Activated CD4-positive, alpha-beta T cell treated with anti-CD3 and anti-CD28 coated beads for 36 hours (primary cell): ENCODE measurements at regions of chr1 and their contacts with region 1.

Region 1: DNA sequence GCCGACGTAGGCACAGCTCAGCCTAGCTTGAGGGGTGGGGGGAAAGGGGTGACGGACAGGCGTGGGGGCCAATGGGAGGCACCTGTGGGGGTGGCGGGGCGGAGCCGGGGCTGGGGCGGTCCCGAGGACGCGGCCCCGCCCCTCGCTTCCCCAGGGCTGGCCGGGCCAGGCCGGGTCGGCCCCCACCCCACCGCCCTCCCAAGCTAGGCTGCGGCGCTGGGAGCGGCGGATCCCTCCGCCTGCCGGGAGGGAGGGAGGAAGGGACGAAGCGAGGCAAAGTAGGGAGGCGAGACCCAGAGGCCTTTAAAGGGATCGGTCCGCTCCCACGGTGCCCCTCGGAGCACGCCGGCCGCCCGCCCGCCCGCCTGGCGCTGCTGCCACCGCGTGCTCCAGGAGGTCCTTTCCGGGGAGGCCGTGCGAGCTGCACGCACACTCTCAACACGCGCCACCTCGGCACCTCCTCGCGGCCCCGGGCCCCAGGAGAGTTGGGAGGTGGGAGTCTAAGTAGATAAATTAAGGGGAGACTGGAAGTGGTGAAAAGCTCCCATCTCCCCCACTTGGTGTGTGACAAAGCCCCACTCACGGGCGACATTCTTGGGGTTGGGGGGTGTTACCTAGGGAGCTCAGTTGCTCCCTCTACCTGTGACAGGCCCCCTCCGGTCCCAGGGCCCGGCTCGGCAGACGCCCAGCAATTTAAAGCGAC is 373 bp upstream of the MEF2D start:
- DNase-seq: peak; percentile 96
- ATAC-seq: peak; percentile 65
- H3K4me3 Mint-ChIP-seq: peak overlapping the region; percentile 88
- H3K27ac Mint-ChIP-seq: peak overlapping the region; percentile 99
- H3K4me1 Mint-ChIP-seq: peaks cover 73% of the 10 kb centered on the region
- H3K27me3 Mint-ChIP-seq: no peaks in the 10 kb centered on the region

Region 2: GRCh38 chr1:155648551-155649147 is 852.3 kb before region 1 on chr1:
- CTCF ChIA-PET with region 1: no interaction called
- POLR2A ChIA-PET with region 1: no interaction called
- intact Hi-C with region 1: no loop called
- DNase-seq: no peak
- ATAC-seq: peak; percentile 51
- H3K4me3 Mint-ChIP-seq: no peak overlapping the region
- H3K27ac Mint-ChIP-seq: no peak overlapping the region
- H3K4me1 Mint-ChIP-seq: peaks cover 4% of the 10 kb centered on the region
- H3K27me3 Mint-ChIP-seq: peaks cover 2% of the 10 kb centered on the region

Region 3: DNA sequence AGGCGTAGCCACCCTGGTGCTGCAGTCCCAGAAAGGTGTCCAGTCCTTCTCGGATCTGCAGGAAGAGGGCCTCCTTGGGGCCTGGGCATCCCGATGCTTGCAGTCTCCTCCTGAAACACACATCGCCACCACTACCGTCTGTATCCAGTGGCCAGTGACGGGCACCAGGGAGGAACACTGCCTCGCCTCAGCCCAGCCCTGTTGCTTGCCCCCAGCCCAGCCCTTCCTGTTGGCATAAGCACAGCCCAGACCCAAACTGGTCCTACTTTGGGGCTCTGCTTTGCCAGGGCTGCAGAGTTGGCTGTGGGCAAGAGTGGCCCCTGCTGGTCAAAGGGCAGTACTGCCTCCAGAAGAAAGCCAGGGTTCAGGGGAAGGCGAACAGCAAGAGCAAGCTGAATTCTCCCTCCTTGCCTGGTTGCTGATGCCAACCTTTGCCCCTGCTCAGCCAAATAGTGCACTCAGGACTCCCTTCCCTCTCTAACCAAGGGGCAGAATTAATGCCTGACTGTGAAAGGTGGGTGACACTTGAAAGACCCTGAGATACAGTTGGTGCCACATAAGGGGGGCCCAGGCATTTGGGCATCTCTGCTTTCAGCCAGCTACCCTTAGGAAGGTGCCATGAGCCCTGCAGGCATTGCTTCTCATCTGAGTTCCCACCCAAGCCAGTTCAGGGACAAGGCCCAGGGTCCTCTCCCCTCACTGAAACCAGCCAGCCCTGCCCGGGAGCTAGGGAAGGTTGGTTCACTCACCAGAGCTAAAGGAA is 511.5 kb before region 1 on chr1:
- CTCF ChIA-PET with region 1: no interaction called
- POLR2A ChIA-PET with region 1: no interaction called
- intact Hi-C with region 1: no loop called
- DNase-seq: peak; percentile 88
- ATAC-seq: peak; percentile 96
- H3K4me3 Mint-ChIP-seq: no peak overlapping the region
- H3K27ac Mint-ChIP-seq: no peak overlapping the region
- H3K4me1 Mint-ChIP-seq: peaks cover 16% of the 10 kb centered on the region
- H3K27me3 Mint-ChIP-seq: no peaks in the 10 kb centered on the region

Region 4: DNA sequence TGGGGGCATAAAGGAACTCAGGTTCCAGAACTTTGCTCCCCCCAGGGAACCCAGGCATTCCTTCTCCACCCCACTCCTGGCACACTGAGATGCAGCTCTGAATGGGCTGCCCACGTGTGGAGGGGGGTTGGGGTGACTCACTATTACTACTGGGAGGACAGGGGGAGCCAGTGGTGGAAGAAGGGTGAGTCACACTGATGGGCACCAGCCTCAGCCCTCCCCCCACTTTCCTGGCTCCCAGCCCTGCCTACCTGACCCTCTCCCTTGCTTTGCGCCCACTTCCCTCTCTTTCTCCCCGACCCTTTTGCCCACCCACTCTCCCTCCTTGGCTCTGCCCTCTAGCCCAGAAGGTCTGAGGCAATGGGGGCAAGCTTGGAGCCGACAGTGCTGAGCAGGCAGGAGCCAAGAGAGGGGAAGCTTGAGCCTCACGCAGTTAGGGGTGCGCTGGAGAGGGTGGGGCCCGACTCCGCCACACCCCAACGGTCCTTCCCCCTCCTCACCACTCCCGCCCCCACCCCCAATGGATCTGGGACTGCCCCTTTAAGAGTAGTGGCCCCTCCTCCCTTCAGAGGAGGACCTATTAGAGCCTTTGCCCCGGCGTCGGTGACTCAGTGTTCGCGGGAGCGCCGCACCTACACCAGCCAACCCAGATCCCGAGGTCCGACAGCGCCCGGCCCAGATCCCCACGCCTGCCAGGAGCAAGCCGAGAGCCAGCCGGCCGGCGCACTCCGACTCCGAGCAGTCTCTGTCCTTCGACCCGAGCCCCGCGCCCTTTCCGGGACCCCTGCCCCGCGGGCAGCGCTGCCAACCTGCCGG is 386.6 kb before region 1 on chr1 and contains the start of gene LMNA:
- CTCF ChIA-PET with region 1: no interaction called
- POLR2A ChIA-PET with region 1: no interaction called
- intact Hi-C with region 1: loop called in 1 of 2 experiments (anchors 1 kb)
- DNase-seq: peak; percentile 90
- ATAC-seq: peak; percentile 91
- H3K4me3 Mint-ChIP-seq: peak within 1 kb of the TSS; percentile 93
- H3K27ac Mint-ChIP-seq: peak within 1 kb of the TSS; percentile 83
- H3K4me1 Mint-ChIP-seq: peaks cover 26% of the 10 kb centered on the region
- H3K27me3 Mint-ChIP-seq: peaks cover 19% of the 10 kb centered on the region
- total RNA-seq, gene LMNA: 184 to 218 TPM

Region 5: DNA sequence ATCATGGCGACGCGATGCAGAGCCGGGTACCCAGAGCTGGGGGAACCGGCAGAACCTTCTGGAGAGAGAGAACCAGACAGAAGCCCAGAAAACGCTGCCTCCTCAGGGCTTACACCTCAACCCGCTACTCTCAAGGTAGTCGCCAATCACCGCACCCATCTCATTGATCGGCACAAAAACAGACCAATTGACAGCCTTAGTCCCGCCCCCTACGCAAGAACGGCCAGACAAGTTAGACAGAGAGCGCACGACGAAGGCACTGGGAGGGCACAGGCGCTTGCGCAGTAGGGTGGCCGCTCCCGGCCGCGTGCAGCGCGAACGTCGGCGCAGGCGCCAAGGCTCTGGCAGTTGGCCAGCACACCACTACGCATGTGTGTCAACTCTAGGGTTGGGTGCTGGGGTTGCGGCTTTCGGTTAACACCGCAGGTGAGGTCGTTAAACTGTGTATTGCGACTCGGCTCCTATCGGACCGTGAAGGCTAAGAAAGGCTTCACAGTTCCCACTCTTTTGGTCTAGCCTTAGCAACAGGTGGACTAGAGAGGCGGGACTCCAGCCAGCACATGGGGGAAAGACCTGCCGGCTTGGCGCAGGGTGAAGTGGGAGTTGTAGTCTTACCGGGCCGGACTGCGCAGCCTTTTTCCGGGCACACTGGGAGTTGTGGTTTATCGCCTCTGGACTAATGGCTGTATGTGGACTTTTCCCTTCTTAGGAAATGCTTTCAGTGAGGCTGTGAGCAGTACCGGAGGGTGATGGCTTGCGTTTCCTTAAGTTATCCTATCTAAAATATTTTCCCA is 162.6 kb before region 1 on chr1 and contains the starts of genes CCT3 and TSACC:
- CTCF ChIA-PET with region 1: interaction called, 4 read pairs
- POLR2A ChIA-PET with region 1: no interaction called
- intact Hi-C with region 1: loop called in 1 of 2 experiments (anchors 1 kb)
- DNase-seq: peak; percentile 99
- ATAC-seq: peak; percentile 96
- H3K4me3 Mint-ChIP-seq: peak within 1 kb of the TSS; percentile 98
- H3K27ac Mint-ChIP-seq: peak within 1 kb of the TSS; percentile 96
- H3K4me1 Mint-ChIP-seq: peaks cover 29% of the 10 kb centered on the region
- H3K27me3 Mint-ChIP-seq: no peaks in the 10 kb centered on the region
- total RNA-seq, gene CCT3: 297 to 406 TPM
- total RNA-seq, gene TSACC: 0.25 to 0.83 TPM

Region 6: GRCh38 chr1:156489166-156489934 is 11.6 kb before region 1 on chr1:
- CTCF ChIA-PET with region 1: interaction called, 63 read pairs
- POLR2A ChIA-PET with region 1: interaction called, 27 read pairs
- intact Hi-C with region 1: loop called in 1 of 2 experiments (anchors 1 kb)
- DNase-seq: peak; percentile 72
- ATAC-seq: peak; percentile 53
- H3K4me3 Mint-ChIP-seq: peak overlapping the region; percentile 34
- H3K27ac Mint-ChIP-seq: peak overlapping the region; percentile 72
- H3K4me1 Mint-ChIP-seq: peaks cover 83% of the 10 kb centered on the region
- H3K27me3 Mint-ChIP-seq: no peaks in the 10 kb centered on the region

Region 7: GRCh38 chr1:156601122-156601830 is 100.3 kb after region 1 on chr1 and contains the start of gene GPATCH4:
- CTCF ChIA-PET with region 1: interaction called, 7 read pairs
- POLR2A ChIA-PET with region 1: interaction called, 5 read pairs
- intact Hi-C with region 1: loop called (anchors 1 to 5 kb)
- DNase-seq: peak; percentile 89
- ATAC-seq: peak; percentile 76
- H3K4me3 Mint-ChIP-seq: peak within 1 kb of the TSS; percentile 97
- H3K27ac Mint-ChIP-seq: peak within 1 kb of the TSS; percentile 99
- H3K4me1 Mint-ChIP-seq: peaks cover 45% of the 10 kb centered on the region
- H3K27me3 Mint-ChIP-seq: no peaks in the 10 kb centered on the region
- total RNA-seq, gene GPATCH4: 38.5 to 48.7 TPM

Region 8: DNA sequence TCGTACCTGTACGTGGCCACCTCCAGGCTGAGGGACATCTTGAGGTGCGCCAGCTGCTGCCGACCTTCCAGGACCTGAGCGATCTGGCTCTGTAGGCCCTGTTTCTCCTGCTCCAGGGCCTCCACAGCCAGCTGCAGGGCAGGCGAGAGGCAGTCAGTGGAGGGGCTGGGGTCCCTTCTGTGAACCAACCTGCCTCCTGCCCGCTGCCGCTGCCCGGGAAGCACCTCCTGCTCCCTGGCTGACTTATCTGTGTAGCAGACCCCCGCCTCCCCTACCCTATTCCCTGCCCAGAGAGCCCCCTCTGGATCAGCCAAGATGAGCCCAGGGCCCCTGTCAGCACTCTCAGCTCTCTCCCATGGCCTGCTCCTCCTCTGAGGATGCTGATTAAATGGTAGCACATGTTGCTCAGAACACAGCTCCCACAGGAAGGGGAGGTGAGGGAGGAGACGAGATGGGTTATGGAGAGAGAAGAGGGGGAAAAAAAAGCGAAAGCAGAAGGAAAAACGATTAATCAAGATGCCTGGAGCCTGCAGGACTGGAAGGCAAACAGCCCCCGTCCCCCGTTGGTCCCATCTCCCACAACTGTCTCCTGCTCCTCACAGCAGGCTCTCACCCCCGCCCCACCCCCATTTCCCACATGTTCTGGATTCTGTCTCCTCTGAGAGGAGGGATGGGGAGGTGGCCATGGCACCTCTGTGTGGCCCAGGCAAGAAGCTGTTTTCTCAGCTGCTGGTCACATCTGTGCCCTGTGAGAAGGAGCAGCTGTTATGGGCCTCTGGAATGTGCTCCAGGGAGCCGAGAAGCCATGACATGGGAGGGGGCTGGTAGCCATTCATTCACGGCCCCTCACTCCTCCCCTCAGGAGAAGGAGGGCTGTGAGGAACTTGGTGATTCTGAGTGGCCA is 174.5 kb after region 1 on chr1:
- CTCF ChIA-PET with region 1: no interaction called
- POLR2A ChIA-PET with region 1: no interaction called
- intact Hi-C with region 1: no loop called
- DNase-seq: no peak
- ATAC-seq: no peak
- H3K4me3 Mint-ChIP-seq: no peak overlapping the region
- H3K27ac Mint-ChIP-seq: no peak overlapping the region
- H3K4me1 Mint-ChIP-seq: peaks cover 11% of the 10 kb centered on the region
- H3K27me3 Mint-ChIP-seq: peaks cover 40% of the 10 kb centered on the region

Region 9: DNA sequence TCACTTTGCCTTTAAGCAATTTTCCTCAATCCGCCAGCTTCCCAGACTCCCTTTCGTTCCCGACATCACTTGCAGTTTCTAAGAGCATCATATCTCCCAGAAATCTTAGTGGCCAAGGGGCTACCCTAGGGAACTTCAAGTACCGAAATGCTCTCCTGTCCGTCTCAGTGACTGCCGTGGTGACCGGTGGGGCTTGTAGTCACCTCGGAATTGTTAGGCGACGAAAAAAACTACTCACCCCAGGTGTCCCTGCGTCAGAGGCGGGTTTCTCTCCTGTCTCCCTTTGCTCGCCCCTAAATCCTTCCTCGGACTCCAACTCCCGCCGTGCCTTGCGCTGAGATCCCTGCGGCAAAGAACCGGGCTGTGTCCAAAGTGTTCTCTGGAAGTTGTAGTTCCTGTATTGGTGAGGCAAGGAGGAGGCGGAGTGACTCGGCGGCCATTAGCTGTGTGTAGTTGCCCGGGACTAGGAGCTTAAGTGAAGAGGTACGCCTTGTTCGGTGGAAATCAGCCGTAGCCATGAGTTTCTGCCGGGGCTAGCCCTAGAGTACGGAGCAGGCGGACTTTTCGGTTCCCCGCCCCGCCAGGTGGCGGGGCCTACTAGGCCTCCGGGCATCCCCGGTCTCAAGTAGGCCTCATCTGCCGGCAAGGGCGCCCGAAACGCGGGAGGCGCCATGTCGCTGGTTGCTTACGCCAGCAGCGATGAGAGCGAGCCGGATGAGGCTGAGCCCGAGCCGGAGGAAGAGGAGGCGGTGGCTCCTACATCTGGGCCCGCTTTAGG is 266.3 kb after region 1 on chr1 and contains the start of gene PRCC:
- CTCF ChIA-PET with region 1: interaction called, 4 read pairs
- POLR2A ChIA-PET with region 1: interaction called, 4 read pairs
- intact Hi-C with region 1: loop called in 1 of 2 experiments (anchors 1 kb)
- DNase-seq: peak; percentile 98
- ATAC-seq: peak; percentile 96
- H3K4me3 Mint-ChIP-seq: no peak within 1 kb of the TSS
- H3K27ac Mint-ChIP-seq: no peak within 1 kb of the TSS
- H3K4me1 Mint-ChIP-seq: peaks cover 35% of the 10 kb centered on the region
- H3K27me3 Mint-ChIP-seq: no peaks in the 10 kb centered on the region
- total RNA-seq, gene PRCC: 80.4 to 110 TPM